PC-3 (cell line): ENCODE measurements at regions of chr4 and their contacts with region 1.

Region 1: DNA sequence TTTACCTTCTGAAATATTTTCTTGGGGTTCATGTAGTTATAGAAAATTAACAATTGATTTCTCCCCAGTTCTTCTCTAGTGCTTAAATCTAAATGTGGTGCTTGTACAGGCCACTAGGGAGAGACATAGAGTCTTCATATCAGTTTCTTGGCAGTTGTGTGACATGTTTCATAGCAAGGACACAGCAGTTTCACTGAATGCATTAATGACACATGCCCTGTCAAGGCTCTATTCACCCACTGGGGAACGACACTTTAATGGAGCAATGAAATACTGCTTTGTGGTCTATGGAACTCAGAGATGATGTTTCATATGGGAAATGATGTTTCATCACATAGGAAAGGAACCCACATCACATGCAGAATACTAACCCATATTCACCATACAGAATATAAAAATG is 2.8 kb downstream of the VEGFC start:
- DNase-seq: peak; percentile 89
- ATAC-seq: peak; percentile 27
- H3K4me3 ChIP-seq: peak overlapping the region; percentile 98
- H3K27ac ChIP-seq: peak overlapping the region; percentile 100
- H3K4me1 ChIP-seq: peaks cover 49% of the 10 kb centered on the region
- H3K27me3 ChIP-seq: no peaks in the 10 kb centered on the region
- CTCF ChIP-seq: peak; percentile 79

Region 2: GRCh38 chr4:176443117-176443516 is 346.8 kb before region 1 on chr4:
- CTCF ChIA-PET with region 1: no interaction called
- POLR2A ChIA-PET with region 1: interaction called, 8 read pairs
- intact Hi-C with region 1: loop called (anchors 5 kb)
- DNase-seq: peak; percentile 89
- ATAC-seq: peak; percentile 98
- H3K4me3 ChIP-seq: no peak overlapping the region
- H3K27ac ChIP-seq: peak overlapping the region; percentile 98
- H3K4me1 ChIP-seq: peaks cover 32% of the 10 kb centered on the region
- H3K27me3 ChIP-seq: no peaks in the 10 kb centered on the region
- CTCF ChIP-seq: no peak

Region 3: GRCh38 chr4:176778491-176778890 is 11.5 kb before region 1 on chr4:
- CTCF ChIA-PET with region 1: no interaction called
- POLR2A ChIA-PET with region 1: interaction called, 3 read pairs
- intact Hi-C with region 1: loop called (anchors 1 kb)
- DNase-seq: peak; percentile 68
- ATAC-seq: peak; percentile 41
- H3K4me3 ChIP-seq: peak overlapping the region; percentile 47; the same call in 1 of the 2 replicates
- H3K27ac ChIP-seq: peak overlapping the region; percentile 79
- H3K4me1 ChIP-seq: peaks cover 82% of the 10 kb centered on the region
- H3K27me3 ChIP-seq: no peaks in the 10 kb centered on the region
- CTCF ChIP-seq: no peak

Region 4: GRCh38 chr4:176902710-176903323 is 112.9 kb after region 1 on chr4:
- CTCF ChIA-PET with region 1: interaction called, 3 read pairs
- POLR2A ChIA-PET with region 1: interaction called, 3 read pairs
- intact Hi-C with region 1: loop called (anchors 1 kb)
- DNase-seq: peak; percentile 80
- ATAC-seq: peak; percentile 69
- H3K4me3 ChIP-seq: peak overlapping the region; percentile 9; the same call in 1 of the 2 replicates
- H3K27ac ChIP-seq: peak overlapping the region; percentile 94
- H3K4me1 ChIP-seq: peaks cover 41% of the 10 kb centered on the region
- H3K27me3 ChIP-seq: no peaks in the 10 kb centered on the region
- CTCF ChIP-seq: no peak

Region 5: GRCh38 chr4:177001271-177002175 is 211.6 kb after region 1 on chr4:
- CTCF ChIA-PET with region 1: no interaction called
- POLR2A ChIA-PET with region 1: interaction called, 7 read pairs
- intact Hi-C with region 1: loop called (anchors 1 kb)
- DNase-seq: peak; percentile 62
- ATAC-seq: peak; percentile 23
- H3K4me3 ChIP-seq: no peak overlapping the region
- H3K27ac ChIP-seq: peak overlapping the region; percentile 99
- H3K4me1 ChIP-seq: peaks cover 49% of the 10 kb centered on the region
- H3K27me3 ChIP-seq: no peaks in the 10 kb centered on the region
- CTCF ChIP-seq: no peak

Region 6: DNA sequence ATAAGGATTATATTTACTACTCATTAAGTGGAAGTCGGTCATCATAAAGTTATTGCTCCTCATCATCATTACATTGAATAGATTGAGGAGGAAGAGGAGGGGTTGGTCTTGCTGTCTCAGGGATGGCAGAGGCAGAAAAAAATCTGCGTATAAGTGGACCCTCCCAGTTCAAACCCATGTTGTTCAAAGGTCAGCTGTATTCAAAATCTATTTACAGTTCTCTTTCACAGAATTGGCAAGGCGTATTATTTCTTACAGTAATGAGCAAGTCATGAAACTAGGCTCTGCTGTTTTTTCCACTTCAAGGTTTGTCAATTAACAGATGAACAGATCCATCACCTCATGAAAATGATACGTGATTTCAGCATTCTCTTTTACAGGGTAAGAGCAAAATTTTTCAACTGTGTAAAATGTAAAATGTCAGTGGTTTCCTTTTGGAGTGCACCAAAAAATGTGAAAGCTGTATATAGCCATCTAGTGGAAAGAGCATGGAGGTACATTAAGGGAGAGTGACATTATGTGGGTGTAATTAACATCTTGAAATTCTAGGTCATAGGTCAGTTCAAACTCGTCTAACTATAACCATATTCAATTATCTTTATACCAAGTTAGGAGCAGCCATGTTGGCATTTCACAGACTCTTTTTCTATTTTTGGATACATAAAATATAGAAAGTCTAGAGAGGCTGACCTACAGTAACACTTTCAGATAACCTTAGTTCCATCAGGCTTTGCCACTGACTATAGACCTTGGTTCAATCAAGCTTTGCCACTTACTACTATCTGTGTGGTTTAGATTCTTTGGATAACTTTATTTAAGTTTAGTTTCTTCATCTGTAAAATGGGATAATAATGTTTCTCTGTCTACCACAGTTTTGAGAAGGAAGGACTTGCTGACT is 549.8 kb after region 1 on chr4:
- CTCF ChIA-PET with region 1: no interaction called
- POLR2A ChIA-PET with region 1: no interaction called
- intact Hi-C with region 1: loop called (anchors 5 kb)
- DNase-seq: peak; percentile 31
- ATAC-seq: peak; percentile 48; the same call in 1 of the 2 replicates
- H3K4me3 ChIP-seq: no peak overlapping the region
- H3K27ac ChIP-seq: no peak overlapping the region
- H3K4me1 ChIP-seq: no peaks in the 10 kb centered on the region
- H3K27me3 ChIP-seq: no peaks in the 10 kb centered on the region
- CTCF ChIP-seq: peak; percentile 66